ENCODE measurements at regions of chr12 and their contacts with region 1.

Region 1: DNA sequence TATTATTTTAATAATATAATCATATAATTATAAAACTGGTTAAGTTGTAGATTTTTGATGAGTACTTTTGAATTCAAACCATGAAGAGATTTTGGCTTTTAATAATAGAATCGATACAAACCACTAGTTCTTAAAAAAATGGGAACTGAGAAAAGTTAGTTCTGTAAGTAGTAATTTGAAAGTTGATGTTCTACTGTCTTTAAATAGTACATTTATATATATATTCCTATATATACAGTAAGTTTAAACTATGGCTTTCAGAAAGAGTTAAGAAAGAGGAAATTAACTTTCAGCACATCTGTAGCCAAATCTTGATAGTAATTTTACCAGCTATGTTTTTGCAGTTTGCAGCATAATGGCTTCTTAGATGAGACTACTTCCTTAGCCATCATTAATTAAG is 7.8 kb downstream of the LRRK2 start:
- DNase-seq: no peak
- ATAC-seq: peak; percentile 45
- H3K4me3 Mint-ChIP-seq: peak overlapping the region; percentile 32
- H3K27ac Mint-ChIP-seq: peak overlapping the region; percentile 76
- H3K4me1 Mint-ChIP-seq: peaks cover 68% of the 10 kb centered on the region
- H3K27me3 Mint-ChIP-seq: no peaks in the 10 kb centered on the region
- CTCF ChIP-seq: no peak

Region 2: GRCh38 chr12:40152783-40153383 is 79.7 kb before region 1 on chr12:
- CTCF ChIA-PET with region 1: interaction called, 4 read pairs
- POLR2A ChIA-PET with region 1: interaction called, 17 read pairs
- intact Hi-C with region 1: no loop called
- DNase-seq: peak; percentile 33
- ATAC-seq: peak; percentile 56
- H3K4me3 Mint-ChIP-seq: no peak overlapping the region
- H3K27ac Mint-ChIP-seq: peak overlapping the region; percentile 3
- H3K4me1 Mint-ChIP-seq: peaks cover 52% of the 10 kb centered on the region
- H3K27me3 Mint-ChIP-seq: no peaks in the 10 kb centered on the region
- CTCF ChIP-seq: peak; percentile 58

Region 3: GRCh38 chr12:40181490-40181889 is 51.1 kb before region 1 on chr12:
- CTCF ChIA-PET with region 1: no interaction called
- POLR2A ChIA-PET with region 1: interaction called, 15 read pairs
- intact Hi-C with region 1: no loop called
- DNase-seq: no peak
- ATAC-seq: no peak
- H3K4me3 Mint-ChIP-seq: no peak overlapping the region
- H3K27ac Mint-ChIP-seq: no peak overlapping the region
- H3K4me1 Mint-ChIP-seq: no peaks in the 10 kb centered on the region
- H3K27me3 Mint-ChIP-seq: no peaks in the 10 kb centered on the region
- CTCF ChIP-seq: no peak

Region 4: GRCh38 chr12:40248585-40249297 is 16.1 kb after region 1 on chr12:
- CTCF ChIA-PET with region 1: no interaction called
- POLR2A ChIA-PET with region 1: interaction called, 13 read pairs
- intact Hi-C with region 1: loop called (anchors 1 kb)
- DNase-seq: no peak
- ATAC-seq: peak; percentile 72
- H3K4me3 Mint-ChIP-seq: peak overlapping the region; percentile 72
- H3K27ac Mint-ChIP-seq: peak overlapping the region; percentile 80
- H3K4me1 Mint-ChIP-seq: peaks cover 23% of the 10 kb centered on the region
- H3K27me3 Mint-ChIP-seq: no peaks in the 10 kb centered on the region
- CTCF ChIP-seq: no peak

Region 5: GRCh38 chr12:40271981-40272664 is 39.5 kb after region 1 on chr12:
- CTCF ChIA-PET with region 1: no interaction called
- POLR2A ChIA-PET with region 1: interaction called, 12 read pairs
- intact Hi-C with region 1: no loop called
- DNase-seq: no peak
- ATAC-seq: no peak
- H3K4me3 Mint-ChIP-seq: no peak overlapping the region
- H3K27ac Mint-ChIP-seq: no peak overlapping the region
- H3K4me1 Mint-ChIP-seq: no peaks in the 10 kb centered on the region
- H3K27me3 Mint-ChIP-seq: no peaks in the 10 kb centered on the region
- CTCF ChIP-seq: no peak